Activated CD4-positive, alpha-beta memory T cell treated with anti-CD3 and anti-CD28 coated beads for 36 hours (primary cell): ENCODE measurements at regions of chr11 and their contacts with region 1.

Region 1: GRCh38 chr11:4072668-4073285 is 21.8 kb upstream of the RRM1 start:
- DNase-seq: peak; percentile 48
- H3K4me3 Mint-ChIP-seq: no peak overlapping the region
- H3K27ac Mint-ChIP-seq: peak overlapping the region; percentile 65
- H3K4me1 Mint-ChIP-seq: peaks cover 39% of the 10 kb centered on the region
- H3K27me3 Mint-ChIP-seq: no peaks in the 10 kb centered on the region

Region 2: GRCh38 chr11:3817181-3817800 is 255.5 kb before region 1 on chr11:
- CTCF ChIA-PET with region 1: interaction called, 17 read pairs
- POLR2A ChIA-PET with region 1: no interaction called
- intact Hi-C with region 1: no loop called
- DNase-seq: no peak
- H3K4me3 Mint-ChIP-seq: no peak overlapping the region
- H3K27ac Mint-ChIP-seq: no peak overlapping the region
- H3K4me1 Mint-ChIP-seq: no peaks in the 10 kb centered on the region
- H3K27me3 Mint-ChIP-seq: no peaks in the 10 kb centered on the region

Region 3: DNA sequence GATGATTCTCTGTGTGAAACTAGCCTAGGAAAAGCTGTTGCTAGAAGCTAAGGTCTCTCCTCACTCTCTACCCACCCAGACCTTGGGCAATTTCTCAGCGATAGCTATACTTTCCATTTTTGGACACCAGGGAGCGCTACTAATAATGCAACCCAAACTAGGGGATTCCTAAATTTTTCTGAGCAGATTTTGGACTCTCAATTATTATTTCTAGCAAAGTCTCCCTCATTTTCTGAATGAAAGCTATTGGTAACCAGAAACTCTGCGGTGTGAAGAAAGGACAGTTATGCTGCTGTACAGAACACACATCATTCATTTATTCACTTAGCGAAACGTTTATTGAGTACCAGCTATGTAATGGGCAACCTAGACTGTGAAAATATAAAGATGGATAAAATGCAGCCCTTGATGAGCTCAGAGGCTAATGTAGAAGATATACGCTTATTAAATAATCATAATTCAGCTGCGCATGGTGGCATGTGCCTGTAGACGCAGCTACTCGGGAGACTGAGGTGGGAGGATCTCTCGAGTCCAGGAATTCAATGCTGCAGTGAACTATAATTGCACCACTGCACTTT is 223.4 kb before region 1 on chr11:
- CTCF ChIA-PET with region 1: interaction called, 756 read pairs
- POLR2A ChIA-PET with region 1: interaction called, 15 read pairs
- intact Hi-C with region 1: loop called (anchors 1 kb)
- DNase-seq: peak; percentile 42
- H3K4me3 Mint-ChIP-seq: no peak overlapping the region
- H3K27ac Mint-ChIP-seq: peak overlapping the region; percentile 34
- H3K4me1 Mint-ChIP-seq: peaks cover 37% of the 10 kb centered on the region
- H3K27me3 Mint-ChIP-seq: no peaks in the 10 kb centered on the region

Region 4: DNA sequence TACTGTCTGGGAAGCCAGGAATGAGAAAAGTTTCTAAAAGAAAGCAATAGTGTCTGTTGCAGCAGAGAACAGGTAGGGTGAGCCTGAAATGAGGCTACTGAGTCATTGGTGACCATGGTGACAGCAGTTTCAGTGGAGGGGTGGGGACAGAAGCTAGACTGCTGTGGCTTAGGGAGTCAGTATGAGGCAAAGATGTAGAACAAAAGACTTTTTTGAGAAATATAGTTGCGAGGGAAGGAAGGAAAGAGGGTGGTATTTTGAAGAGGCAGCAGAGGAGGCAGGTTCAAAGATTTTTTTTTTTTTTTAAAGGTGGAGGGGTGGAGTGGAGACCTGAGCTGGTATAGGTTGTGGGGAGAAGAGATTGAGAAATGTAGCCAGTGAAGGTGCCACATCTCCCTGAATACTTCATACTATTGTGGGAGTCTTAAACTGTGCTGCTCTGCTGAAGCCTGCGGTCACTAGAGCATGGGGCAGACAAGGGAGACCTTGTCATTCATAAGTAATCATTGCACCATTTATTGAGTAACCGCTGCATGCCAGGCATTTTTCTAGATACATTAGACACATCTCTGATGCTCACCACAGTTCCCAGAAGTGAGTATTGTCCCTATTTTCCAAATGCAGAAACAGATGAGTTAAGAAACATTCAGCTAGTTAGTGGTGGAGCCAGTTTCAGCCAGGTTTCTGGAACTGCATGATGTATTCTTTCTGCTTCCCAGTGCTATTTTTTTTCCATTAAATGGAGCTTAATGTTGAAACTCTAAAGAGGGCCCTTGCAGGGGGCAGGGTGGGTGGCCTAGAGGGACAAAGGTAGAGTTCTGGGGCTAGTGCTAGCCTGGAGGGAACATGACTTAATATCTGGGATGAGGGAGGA is 167.5 kb before region 1 on chr11:
- CTCF ChIA-PET with region 1: interaction called, 10 read pairs
- POLR2A ChIA-PET with region 1: no interaction called
- intact Hi-C with region 1: no loop called
- DNase-seq: peak; percentile 86
- H3K4me3 Mint-ChIP-seq: peak overlapping the region; percentile 35
- H3K27ac Mint-ChIP-seq: peak overlapping the region; percentile 80
- H3K4me1 Mint-ChIP-seq: peaks cover 77% of the 10 kb centered on the region
- H3K27me3 Mint-ChIP-seq: no peaks in the 10 kb centered on the region

Region 5: DNA sequence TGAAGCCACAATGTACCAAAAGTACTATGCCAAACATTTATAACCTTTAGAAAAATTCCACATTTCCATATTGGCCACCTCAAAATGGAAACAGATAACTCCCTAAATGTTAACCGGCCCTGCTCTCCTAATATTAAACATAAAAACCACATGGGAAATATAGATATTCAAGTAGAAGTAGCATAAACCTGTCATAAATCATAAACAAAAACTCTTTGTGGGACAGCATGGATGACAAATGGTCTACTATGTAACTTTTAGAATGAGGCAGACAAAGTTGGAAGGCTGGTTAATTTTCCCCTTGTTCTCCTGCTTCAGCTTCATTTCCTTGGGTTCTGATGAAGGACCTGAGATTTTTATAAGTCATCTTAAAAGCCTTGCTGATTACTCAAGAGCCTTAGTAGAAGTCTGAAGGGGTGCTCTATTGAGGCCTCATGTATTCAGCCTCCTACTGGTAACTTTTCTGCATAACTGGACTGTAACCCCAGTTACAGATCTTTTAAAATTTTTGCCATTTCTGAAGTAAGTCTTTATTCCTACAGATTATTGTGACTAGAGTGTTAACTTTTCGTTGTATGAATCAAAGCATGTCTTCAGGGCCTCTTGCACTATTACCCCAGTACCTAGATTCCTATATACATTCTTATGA is 100.9 kb before region 1 on chr11:
- CTCF ChIA-PET with region 1: interaction called, 15 read pairs
- POLR2A ChIA-PET with region 1: no interaction called
- intact Hi-C with region 1: no loop called
- DNase-seq: no peak
- H3K4me3 Mint-ChIP-seq: no peak overlapping the region
- H3K27ac Mint-ChIP-seq: peak overlapping the region; percentile 44
- H3K4me1 Mint-ChIP-seq: peaks cover 61% of the 10 kb centered on the region
- H3K27me3 Mint-ChIP-seq: no peaks in the 10 kb centered on the region

Region 6: GRCh38 chr11:4044976-4045646 is 27.7 kb before region 1 on chr11:
- CTCF ChIA-PET with region 1: interaction called, 10 read pairs
- POLR2A ChIA-PET with region 1: no interaction called
- intact Hi-C with region 1: no loop called
- DNase-seq: no peak
- H3K4me3 Mint-ChIP-seq: no peak overlapping the region
- H3K27ac Mint-ChIP-seq: no peak overlapping the region
- H3K4me1 Mint-ChIP-seq: peaks cover 14% of the 10 kb centered on the region
- H3K27me3 Mint-ChIP-seq: no peaks in the 10 kb centered on the region

Region 7: DNA sequence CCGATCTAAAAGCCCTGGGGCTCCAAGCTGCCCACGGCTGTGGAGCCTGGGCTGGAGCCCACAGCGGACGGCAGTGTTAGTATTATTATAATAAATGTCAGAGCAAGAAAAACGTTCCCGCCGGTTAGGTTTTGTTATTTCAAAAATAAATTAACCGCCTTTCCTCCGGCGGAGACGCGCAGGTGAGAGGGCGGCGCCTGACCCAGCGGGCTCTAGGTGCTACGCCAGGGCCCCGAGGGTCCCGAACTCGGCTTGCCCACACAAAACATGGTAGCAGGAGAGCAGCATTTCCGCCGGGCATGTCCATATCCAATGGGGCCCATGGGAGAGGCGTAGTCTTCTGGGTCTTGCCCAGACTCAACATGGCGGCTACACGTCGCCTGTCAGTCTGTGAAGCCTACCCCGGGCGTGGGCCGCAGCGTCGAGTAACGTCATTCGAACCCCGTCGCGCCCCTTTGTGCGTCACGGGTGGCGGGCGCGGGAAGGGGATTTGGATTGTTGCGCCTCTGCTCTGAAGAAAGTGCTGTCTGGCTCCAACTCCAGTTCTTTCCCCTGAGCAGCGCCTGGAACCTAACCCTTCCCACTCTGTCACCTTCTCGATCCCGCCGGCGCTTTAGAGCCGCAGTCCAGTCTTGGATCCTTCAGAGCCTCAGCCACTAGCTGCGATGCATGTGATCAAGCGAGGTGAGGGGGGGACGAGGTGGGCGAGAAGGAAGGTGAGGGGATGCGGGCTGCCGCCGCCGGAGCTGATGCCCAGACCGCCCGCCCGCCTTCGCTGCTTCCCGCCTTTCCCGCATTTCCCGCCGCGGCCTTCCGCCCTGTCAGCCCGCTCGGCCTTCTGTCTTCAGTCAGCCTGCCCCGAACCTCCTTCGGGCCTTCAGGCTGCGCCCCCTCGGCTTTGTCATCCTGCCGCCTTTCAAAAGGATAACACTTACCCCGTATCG is 21.8 kb after region 1 on chr11 and contains the start of gene RRM1:
- CTCF ChIA-PET with region 1: interaction called, 15 read pairs
- POLR2A ChIA-PET with region 1: no interaction called
- intact Hi-C with region 1: no loop called
- DNase-seq: peak; percentile 97
- H3K4me3 Mint-ChIP-seq: peak within 1 kb of the TSS; percentile 95
- H3K27ac Mint-ChIP-seq: peak within 1 kb of the TSS; percentile 92
- H3K4me1 Mint-ChIP-seq: peaks cover 71% of the 10 kb centered on the region
- H3K27me3 Mint-ChIP-seq: no peaks in the 10 kb centered on the region
- total RNA-seq, gene RRM1: 201 to 203 TPM

Region 8: DNA sequence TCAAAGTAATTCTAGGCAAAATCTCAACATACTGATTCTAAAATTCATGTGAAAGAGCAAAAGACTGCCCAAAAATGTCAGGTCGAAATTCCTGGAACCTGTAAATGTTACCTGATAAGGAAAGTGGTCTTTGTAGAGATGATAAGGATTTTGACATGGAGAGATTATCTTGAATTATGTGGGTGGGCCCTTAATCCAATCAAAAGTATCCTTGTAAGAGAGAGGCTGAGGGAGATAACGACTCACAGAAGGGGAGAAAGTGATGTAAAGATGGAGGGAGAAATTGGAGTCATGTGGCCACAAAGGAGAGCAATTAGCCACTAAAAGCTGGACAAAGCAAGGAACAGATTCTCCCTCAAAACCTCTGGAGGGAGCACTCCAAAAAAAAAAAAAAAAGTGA is 42.4 kb after region 1 on chr11:
- CTCF ChIA-PET with region 1: no interaction called
- POLR2A ChIA-PET with region 1: no interaction called
- intact Hi-C with region 1: no loop called
- DNase-seq: no peak
- H3K4me3 Mint-ChIP-seq: no peak overlapping the region
- H3K27ac Mint-ChIP-seq: no peak overlapping the region
- H3K4me1 Mint-ChIP-seq: peaks cover 20% of the 10 kb centered on the region
- H3K27me3 Mint-ChIP-seq: no peaks in the 10 kb centered on the region

Region 9: GRCh38 chr11:4134844-4135243 is 62.1 kb after region 1 on chr11:
- CTCF ChIA-PET with region 1: no interaction called
- POLR2A ChIA-PET with region 1: no interaction called
- intact Hi-C with region 1: no loop called
- DNase-seq: no peak
- H3K4me3 Mint-ChIP-seq: no peak overlapping the region
- H3K27ac Mint-ChIP-seq: no peak overlapping the region
- H3K4me1 Mint-ChIP-seq: no peaks in the 10 kb centered on the region
- H3K27me3 Mint-ChIP-seq: no peaks in the 10 kb centered on the region